Cardiac septum (tissue), 1 donor: ENCODE measurements at regions of chr11 and their contacts with region 1.

Region 1: DNA sequence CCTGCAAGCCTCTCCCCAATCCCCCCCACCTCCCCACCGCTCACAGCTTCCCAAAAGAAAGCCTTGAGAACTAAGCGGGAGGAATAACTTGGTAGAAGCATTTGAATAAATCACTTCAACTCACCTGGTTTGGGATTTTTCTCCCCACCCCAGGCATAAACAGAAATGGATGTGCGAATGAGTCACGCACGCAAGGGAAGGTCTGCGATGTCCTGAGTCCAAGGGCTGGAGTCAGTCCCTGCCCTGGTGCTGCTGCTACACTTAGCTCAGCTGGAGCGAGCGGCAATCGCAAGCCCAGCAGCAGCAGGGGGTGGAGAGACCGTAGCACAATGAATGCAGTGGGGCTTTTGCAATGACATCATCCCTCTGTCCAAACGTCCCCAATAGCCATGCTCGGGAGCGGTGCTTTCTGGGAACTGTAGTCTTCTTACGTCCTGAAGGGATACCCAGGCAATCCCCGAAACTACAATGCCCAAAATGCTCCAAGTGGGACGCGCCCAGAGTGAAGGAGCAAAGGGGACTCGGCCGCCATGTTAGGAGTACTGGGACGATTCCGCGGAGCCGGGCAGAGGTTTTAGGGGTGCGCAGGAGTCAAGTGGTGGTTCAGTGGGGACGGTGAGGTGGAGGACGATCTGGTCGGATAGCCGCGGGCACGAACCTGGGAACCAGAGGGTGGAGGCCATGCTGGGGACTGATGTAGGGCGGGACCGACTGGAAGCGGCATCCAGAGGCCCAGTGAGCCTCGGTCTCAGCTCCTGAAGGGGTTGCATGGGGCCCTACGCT is at the start of gene RAB30:
- DNase-seq: peak; percentile 97
- total RNA-seq, gene RAB30: 21.0 TPM

Region 2: DNA sequence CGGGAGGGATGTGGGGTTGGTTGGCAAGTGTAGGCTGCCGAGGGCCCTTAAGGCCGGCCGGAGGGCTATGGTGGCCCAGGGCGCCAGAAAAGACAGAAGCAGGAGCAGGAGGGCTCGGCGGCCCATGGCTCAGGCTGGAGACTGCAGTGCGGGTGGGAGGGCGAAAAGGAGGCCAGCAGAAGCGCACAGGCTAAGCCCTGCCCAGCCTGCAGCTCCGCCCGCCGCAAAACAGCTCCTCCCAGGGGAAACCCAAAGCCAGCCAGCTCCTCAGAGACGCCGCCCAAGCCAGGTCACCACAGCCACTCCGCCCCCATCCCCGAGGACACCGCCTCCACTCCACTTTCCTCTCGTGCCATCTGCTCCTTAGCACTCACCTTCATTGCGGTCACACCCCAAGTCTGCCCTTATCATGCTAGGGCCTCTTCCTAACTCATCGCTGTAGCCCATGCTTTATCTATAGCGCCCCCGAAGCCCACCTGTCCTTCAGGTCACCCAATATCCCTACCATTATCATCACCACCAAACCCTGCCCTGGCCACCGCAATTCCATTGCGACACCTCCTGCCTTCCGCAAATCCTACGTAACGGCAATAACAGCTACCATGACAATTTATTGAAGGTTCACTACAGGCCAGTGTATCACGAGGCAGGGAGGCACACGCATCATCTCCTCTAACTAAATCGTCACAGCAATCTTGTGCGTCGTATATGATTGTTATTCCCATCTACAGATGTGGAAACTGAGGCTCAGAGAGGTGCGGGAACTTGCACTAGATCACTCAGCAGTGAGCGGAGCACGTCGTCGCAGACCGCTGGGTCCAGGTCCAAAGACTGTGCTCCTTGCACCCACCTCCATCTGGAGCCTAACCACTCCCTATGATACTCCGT is 171.2 kb before region 1 on chr11 and contains the start of gene PRCP:
- intact Hi-C with region 1: loop called (anchors 5 kb)
- DNase-seq: peak; percentile 98
- total RNA-seq, gene PRCP: 52.3 TPM

Region 3: DNA sequence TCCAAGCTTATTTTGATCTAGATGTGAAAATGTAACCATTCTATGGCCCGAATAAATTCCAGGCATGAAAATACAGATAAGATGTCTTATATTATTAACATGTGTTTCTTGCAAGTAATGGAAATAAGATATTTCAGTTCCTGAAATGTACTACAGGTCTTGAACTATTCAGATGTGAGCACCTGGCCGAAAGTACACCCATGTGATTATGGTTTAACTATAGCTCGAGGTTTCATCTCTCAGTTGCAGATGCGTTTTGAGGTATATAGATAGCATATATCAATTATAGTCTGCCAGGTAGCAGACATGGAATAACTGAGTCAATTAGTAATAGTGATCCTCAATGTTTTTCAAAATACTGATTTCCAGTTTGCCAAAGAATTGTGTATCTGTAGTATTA is 101.9 kb before region 1 on chr11:
- intact Hi-C with region 1: loop called (anchors 5 kb)
- DNase-seq: no peak

Region 4: GRCh38 chr11:83033972-83034672 is 37.6 kb before region 1 on chr11:
- intact Hi-C with region 1: loop called (anchors 5 kb)
- DNase-seq: no peak

Region 5: GRCh38 chr11:83193315-83194280 is 121.8 kb after region 1 on chr11 and contains the start of gene ANKRD42:
- intact Hi-C with region 1: loop called (anchors 10 kb)
- DNase-seq: peak; percentile 96
- total RNA-seq, gene ANKRD42: 6.0 TPM